Activated CD4-positive, alpha-beta T cell treated with anti-CD3 and anti-CD28 coated beads, Interleukin-2, amount 10 ng/mL, durations not matched to agents 24 days and 14 days (primary cell): ENCODE measurements at regions of chr17 and their contacts with region 1.

Region 1: DNA sequence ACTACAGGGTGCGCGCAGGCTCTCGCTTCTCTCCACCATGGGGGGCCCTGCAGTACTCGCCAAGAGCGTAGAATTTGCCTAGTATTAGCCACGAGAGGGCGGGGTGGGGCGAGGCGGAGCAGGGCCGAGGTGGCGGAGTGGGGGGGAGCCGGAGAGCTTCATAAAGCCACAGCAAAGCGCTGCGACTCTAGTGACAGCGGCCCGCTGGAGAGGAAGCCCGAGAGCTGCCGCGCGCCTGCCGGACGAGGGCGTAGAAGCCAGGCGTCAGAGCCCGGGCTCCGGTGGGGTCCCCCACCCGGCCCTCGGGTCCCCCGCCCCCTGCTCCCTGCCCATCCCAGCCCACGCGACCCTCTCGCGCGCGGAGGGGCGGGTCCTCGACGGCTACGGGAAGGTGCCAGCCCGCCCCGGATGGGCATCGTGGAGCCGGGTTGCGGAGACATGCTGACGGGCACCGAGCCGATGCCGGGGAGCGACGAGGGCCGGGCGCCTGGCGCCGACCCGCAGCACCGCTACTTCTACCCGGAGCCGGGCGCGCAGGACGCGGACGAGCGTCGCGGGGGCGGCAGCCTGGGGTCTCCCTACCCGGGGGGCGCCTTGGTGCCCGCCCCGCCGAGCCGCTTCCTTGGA is at the start of gene TBX21:
- DNase-seq: peak; percentile 96
- H3K4me3 Mint-ChIP-seq: peak within 1 kb of the TSS; percentile 94
- H3K27ac Mint-ChIP-seq: peak within 1 kb of the TSS; percentile 93
- H3K4me1 Mint-ChIP-seq: peaks cover 69% of the 10 kb centered on the region
- H3K27me3 Mint-ChIP-seq: no peaks in the 10 kb centered on the region
- total RNA-seq, gene TBX21: 63.0 and 66.4 TPM in 2 replicates

Region 2: GRCh38 chr17:47705536-47706530 is 27.3 kb before region 1 on chr17:
- intact Hi-C with region 1: loop called (anchors 1 kb)
- DNase-seq: peak; percentile 82
- H3K4me3 Mint-ChIP-seq: peak overlapping the region; percentile 79
- H3K27ac Mint-ChIP-seq: peak overlapping the region; percentile 98
- H3K4me1 Mint-ChIP-seq: peaks cover 73% of the 10 kb centered on the region
- H3K27me3 Mint-ChIP-seq: no peaks in the 10 kb centered on the region

Region 3: GRCh38 chr17:47789611-47790561 is 56.7 kb after region 1 on chr17:
- intact Hi-C with region 1: loop called (anchors 5 kb)
- DNase-seq: peak; percentile 85
- H3K4me3 Mint-ChIP-seq: peak overlapping the region; percentile 69
- H3K27ac Mint-ChIP-seq: no peak overlapping the region
- H3K4me1 Mint-ChIP-seq: peaks cover 8% of the 10 kb centered on the region
- H3K27me3 Mint-ChIP-seq: peaks cover 65% of the 10 kb centered on the region